PC-9 (cell line): ENCODE measurements at regions of chr16 and their contacts with region 1.

Region 1: DNA sequence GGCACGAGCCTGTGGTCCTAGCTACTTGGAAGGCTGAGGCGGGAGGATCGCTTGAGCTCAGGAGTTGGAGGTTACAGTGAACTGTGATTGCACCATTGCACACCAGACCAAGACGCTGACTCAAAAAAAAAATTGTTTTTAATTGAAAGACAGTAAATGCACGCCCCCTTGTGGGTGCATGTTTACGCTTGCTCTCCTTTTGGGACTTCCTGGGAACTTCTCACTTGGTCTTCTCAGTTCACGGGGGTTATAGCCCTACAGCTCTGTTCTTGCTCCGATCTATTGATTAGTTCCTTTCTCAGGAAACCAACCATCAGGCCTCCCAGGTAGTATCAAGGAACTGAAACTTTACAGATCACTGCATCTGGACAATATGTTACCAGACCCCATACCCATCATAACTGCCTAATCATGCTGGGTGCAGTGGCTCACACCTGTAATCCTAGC is 14.2 kb upstream of the RIPOR1 start:
- DNase-seq: peak; percentile 65 to 73
- H3K4me3 ChIP-seq: no peak overlapping the region
- H3K27ac ChIP-seq: no peak overlapping the region
- H3K4me1 ChIP-seq: peaks cover 7% of the 10 kb centered on the region; the same call in 1 of the 2 replicates
- H3K27me3 ChIP-seq: no peaks in the 10 kb centered on the region
- CTCF ChIP-seq: peak; percentile 78

Region 2: GRCh38 chr16:66947302-66948065 is 566.9 kb before region 1 on chr16:
- CTCF ChIA-PET with region 1: no interaction called
- POLR2A ChIA-PET with region 1: no interaction called
- intact Hi-C with region 1: loop called (anchors 2 kb)
- DNase-seq: peak; percentile 72 to 80
- H3K4me3 ChIP-seq: peak overlapping the region; percentile 66
- H3K27ac ChIP-seq: no peak overlapping the region
- H3K4me1 ChIP-seq: no peaks in the 10 kb centered on the region
- H3K27me3 ChIP-seq: no peaks in the 10 kb centered on the region
- CTCF ChIP-seq: peak; percentile 94

Region 3: GRCh38 chr16:67480833-67481560 is 33.4 kb before region 1 on chr16 and contains the start of gene ATP6V0D1:
- CTCF ChIA-PET with region 1: interaction called, 17 read pairs
- POLR2A ChIA-PET with region 1: interaction called, 4 read pairs
- intact Hi-C with region 1: no loop called
- DNase-seq: peak; percentile 92 to 98
- H3K4me3 ChIP-seq: peak within 1 kb of the TSS; percentile 71
- H3K27ac ChIP-seq: peak within 1 kb of the TSS; percentile 31
- H3K4me1 ChIP-seq: peaks cover 14% of the 10 kb centered on the region
- H3K27me3 ChIP-seq: no peaks in the 10 kb centered on the region
- CTCF ChIP-seq: peak; percentile 81
- total RNA-seq, gene ATP6V0D1: 51.5 and 61.0 TPM in 2 replicates

Region 4: GRCh38 chr16:67499106-67499505 is 15.3 kb before region 1 on chr16:
- CTCF ChIA-PET with region 1: interaction called, 3 read pairs
- POLR2A ChIA-PET with region 1: no interaction called
- intact Hi-C with region 1: loop called (anchors 1 kb)
- DNase-seq: no peak
- H3K4me3 ChIP-seq: no peak overlapping the region
- H3K27ac ChIP-seq: no peak overlapping the region
- H3K4me1 ChIP-seq: no peaks in the 10 kb centered on the region
- H3K27me3 ChIP-seq: no peaks in the 10 kb centered on the region
- CTCF ChIP-seq: no peak

Region 5: DNA sequence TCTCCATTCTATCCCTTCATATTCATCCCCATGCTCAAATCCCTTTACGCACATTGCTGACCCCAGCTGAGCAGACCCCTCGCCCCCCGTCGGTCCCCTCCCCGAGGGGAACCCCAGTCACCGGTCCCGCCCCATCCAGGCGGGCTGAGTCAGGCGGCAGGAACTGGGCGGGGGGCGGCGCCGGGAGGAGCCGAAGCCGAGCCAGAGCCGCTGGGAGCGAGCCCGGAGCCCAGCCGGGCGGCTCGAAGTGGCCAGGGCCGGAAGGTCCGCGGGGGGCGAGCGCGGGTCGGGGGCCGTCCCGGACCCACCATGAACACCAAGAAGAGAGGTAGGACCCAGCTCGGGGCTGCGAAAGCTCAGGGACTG is 22.8 kb after region 1 on chr16:
- CTCF ChIA-PET with region 1: no interaction called
- POLR2A ChIA-PET with region 1: no interaction called
- intact Hi-C with region 1: no loop called
- DNase-seq: peak in 1 of 2 experiments; percentile 56
- H3K4me3 ChIP-seq: peak overlapping the region; percentile 59
- H3K27ac ChIP-seq: no peak overlapping the region
- H3K4me1 ChIP-seq: no peaks in the 10 kb centered on the region
- H3K27me3 ChIP-seq: no peaks in the 10 kb centered on the region
- CTCF ChIP-seq: no peak

Region 6: DNA sequence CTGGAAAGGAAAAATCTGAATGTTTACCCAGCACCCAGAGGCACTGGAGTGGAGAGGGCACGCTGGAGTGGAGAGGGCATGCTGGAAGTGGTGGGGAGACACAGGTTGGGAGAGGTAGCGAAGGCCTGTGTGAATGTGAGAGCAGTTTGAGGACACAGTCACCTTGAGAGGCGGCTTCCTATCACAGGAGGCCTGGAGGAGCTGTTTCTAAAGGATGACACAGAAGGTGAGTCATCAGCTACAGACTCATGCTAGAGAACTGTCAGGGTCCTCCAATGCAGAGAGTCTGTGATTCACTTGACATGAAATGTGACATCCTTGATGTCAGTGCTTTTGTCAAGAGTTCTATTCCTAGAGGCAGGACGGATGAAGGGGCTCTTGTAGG is 403.4 kb after region 1 on chr16:
- CTCF ChIA-PET with region 1: no interaction called
- POLR2A ChIA-PET with region 1: interaction called, 14 read pairs
- intact Hi-C with region 1: no loop called
- DNase-seq: no peak
- H3K4me3 ChIP-seq: no peak overlapping the region
- H3K27ac ChIP-seq: no peak overlapping the region
- H3K4me1 ChIP-seq: no peaks in the 10 kb centered on the region
- H3K27me3 ChIP-seq: no peaks in the 10 kb centered on the region
- CTCF ChIP-seq: no peak